Right ventricle myocardium inferior (tissue), 1 donor: ENCODE measurements at regions of chr3 and their contacts with region 1.

Region 1: DNA sequence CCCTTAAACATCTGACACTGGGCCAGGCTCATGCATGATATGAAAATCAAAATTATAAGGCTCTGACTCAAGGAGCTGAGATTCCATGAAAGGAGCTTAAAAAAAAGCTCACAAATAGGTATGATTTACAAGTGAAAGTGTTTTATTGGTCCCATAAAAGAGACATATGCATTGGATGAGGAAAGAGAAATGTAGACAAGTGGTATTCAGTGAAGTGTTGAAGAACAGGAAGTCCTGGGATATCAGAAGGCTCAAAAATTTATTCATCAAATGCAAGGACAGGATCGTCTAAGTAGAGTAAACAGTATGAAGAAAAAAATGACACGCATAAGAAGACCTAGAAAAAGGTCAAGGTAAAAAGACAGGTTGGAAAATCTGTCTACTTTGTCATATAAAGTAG is 188.9 kb downstream of the CBLB start:
- DNase-seq: no peak
- ATAC-seq: no peak

Region 2: GRCh38 chr3:106119614-106120082 is 439.7 kb after region 1 on chr3:
- intact Hi-C with region 1: loop called (anchors 5 kb)
- DNase-seq: no peak
- ATAC-seq: no peak